ENCODE measurements at regions of chr1 and their contacts with region 1.

Region 1: GRCh38 chr1:233904633-233905415 is at the start of gene SLC35F3:
- DNase-seq: no peak
- ATAC-seq: peak; percentile 44 to 77
- total RNA-seq, gene SLC35F3: 0.08 TPM in 1 of 2 donors, not detected in the other

Region 2: DNA sequence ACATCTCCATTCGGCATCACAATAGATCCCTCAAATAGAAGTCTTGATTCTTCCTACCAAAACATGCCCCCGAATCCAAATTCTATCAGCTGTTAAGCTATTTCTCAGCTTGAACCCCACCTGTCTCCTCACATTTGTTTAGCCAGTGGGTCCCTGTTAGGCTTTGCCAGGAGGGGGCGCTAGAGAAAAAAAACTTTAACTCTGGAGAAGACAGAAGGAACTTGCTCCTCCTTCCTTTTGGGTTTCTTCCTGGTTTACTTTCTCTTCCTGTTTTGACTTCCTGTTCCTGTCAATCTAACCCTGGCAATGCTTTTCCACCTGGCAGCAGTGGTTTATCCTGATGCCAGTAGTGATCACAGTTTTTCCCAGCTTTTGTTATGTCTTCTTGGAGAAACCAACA is 386.5 kb before region 1 on chr1:
- intact Hi-C with region 1: loop called in 1 of 2 experiments (anchors 10 kb)
- DNase-seq: no peak
- ATAC-seq: no peak

Region 3: GRCh38 chr1:233960386-233960785 is 55.6 kb after region 1 on chr1:
- intact Hi-C with region 1: no loop called
- DNase-seq: no peak
- ATAC-seq: no peak